ENCODE measurements at regions of chr3 and their contacts with region 1.

Region 1: GRCh38 chr3:108552267-108553159 is 36.7 kb downstream of the CIP2A start:
- DNase-seq: no peak
- H3K4me3 ChIP-seq: no peak overlapping the region
- H3K27ac ChIP-seq: no peak overlapping the region
- H3K4me1 ChIP-seq: peaks cover 0 to 38% (median 22%) of the 10 kb centered on the region in 4 donors
- H3K27me3 ChIP-seq: no peaks in the 10 kb centered on the region
- CTCF ChIP-seq: peak; percentile 43 to 56 (median 51)
- EP300 ChIP-seq: no peak
- POLR2A ChIP-seq: no peak

Region 2: DNA sequence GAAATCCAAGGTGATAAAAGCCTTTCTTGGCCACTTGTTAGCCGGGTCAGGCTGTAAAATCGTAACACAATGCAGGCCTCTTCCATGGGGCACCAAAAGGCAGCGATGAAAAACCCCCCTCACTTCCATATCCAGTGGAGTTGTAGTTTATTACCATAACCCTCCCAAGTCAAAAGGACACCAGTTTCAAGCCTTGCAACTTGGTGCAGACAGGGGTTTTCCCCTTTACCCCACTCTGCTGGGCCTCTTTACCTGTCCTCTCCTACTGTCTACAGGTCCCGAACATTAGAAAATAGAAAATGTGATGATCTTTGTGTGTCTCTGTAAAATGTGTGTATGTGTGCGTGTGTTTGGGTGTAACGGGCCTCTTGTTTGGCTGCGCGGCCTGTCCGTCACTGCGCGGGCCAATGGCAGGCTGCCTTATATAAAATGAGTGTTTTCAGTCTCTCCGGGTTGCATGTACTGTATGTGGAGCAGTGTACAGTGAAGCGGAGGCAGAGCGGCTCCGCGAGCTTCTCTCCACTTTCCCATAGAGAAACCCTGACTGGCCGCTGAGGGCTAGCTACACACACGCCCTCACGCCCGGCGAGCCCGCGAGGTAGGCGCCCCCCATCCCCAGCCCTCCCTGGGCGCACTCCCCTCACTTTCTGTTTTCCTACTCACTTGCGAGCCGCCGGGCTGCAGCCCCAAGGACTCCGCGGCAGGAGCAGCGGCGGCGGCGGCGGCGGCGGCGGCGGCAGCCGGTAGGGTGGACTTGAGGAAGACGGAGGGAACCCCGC is 1029.8 kb before region 1 on chr3 and contains the start of gene BBX:
- in situ Hi-C with region 1: no loop called
- intact Hi-C with region 1: no loop called
- DNase-seq: peak; percentile 94
- H3K4me3 ChIP-seq: peak within 1 kb of the TSS; percentile 61 to 94 (median 81)
- H3K27ac ChIP-seq: peak within 1 kb of the TSS; percentile 93 to 99 (median 96)
- H3K4me1 ChIP-seq: peaks cover 6 to 14% (median 7%) of the 10 kb centered on the region in 4 donors
- H3K27me3 ChIP-seq: no peaks in the 10 kb centered on the region
- CTCF ChIP-seq: no peak
- EP300 ChIP-seq: no peak
- POLR2A ChIP-seq: peak; percentile 85
- total RNA-seq, gene BBX: 22.5 to 39.6 (median 33.1) TPM

Region 3: GRCh38 chr3:108489771-108490170 is 62.7 kb before region 1 on chr3:
- in situ Hi-C with region 1: loop called in 3 of 4 experiments (anchors 5 to 10 kb)
- intact Hi-C with region 1: loop called (anchors 5 kb)
- DNase-seq: no peak
- H3K4me3 ChIP-seq: no peak overlapping the region
- H3K27ac ChIP-seq: no peak overlapping the region
- H3K4me1 ChIP-seq: peaks cover 0 to 8% (median 0%) of the 10 kb centered on the region in 4 donors
- H3K27me3 ChIP-seq: no peaks in the 10 kb centered on the region
- CTCF ChIP-seq: peak; percentile 60 to 74 (median 67)
- EP300 ChIP-seq: no peak
- POLR2A ChIP-seq: no peak

Region 4: DNA sequence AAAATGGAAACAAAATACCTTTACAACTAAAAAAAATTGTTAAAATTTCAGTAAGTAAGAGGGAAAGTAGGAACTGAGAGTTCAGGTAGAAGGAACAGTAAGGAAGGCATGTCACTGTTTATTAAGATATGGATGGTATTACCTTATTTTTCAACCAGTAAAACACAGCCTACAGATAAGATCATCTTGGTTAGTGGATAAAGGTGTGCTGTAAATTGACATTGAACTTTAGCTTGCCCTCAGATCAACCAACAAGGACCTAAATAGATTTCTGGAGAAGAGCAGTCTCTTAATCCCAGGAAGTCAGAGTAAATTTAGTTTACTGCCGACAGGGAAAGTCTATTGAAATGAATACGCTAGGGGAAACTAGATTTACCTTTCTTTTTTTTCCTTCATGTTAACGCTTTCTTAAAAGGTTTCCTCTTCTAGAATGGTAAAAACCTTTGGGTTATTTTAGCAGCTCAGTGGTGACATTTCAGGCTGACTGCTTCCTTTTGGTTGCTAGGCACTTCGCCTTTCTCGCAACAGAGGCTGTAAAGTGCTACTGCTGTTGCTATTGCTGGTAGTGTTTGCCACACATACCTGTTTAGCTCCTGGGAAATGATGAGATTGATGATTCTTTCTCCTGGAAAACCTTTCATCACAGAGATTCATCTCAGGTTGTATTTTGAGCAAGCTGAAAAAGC is 49.9 kb after region 1 on chr3:
- in situ Hi-C with region 1: no loop called
- intact Hi-C with region 1: no loop called
- DNase-seq: no peak
- H3K4me3 ChIP-seq: no peak overlapping the region
- H3K27ac ChIP-seq: peak overlapping the region in 1 of 4 donors; percentile 22
- H3K4me1 ChIP-seq: peaks cover 0 to 2% (median 0%) of the 10 kb centered on the region in 4 donors
- H3K27me3 ChIP-seq: no peaks in the 10 kb centered on the region
- CTCF ChIP-seq: no peak
- EP300 ChIP-seq: no peak
- POLR2A ChIP-seq: no peak

Region 5: GRCh38 chr3:109089265-109089664 is 536.8 kb after region 1 on chr3:
- in situ Hi-C with region 1: no loop called
- intact Hi-C with region 1: no loop called
- DNase-seq: no peak
- H3K4me3 ChIP-seq: no peak overlapping the region
- H3K27ac ChIP-seq: no peak overlapping the region
- H3K4me1 ChIP-seq: no peaks in the 10 kb centered on the region
- H3K27me3 ChIP-seq: no peaks in the 10 kb centered on the region
- CTCF ChIP-seq: no peak
- EP300 ChIP-seq: no peak
- POLR2A ChIP-seq: no peak

Measured in transverse colon (tissue), 4 donors.